ENCODE measurements at regions of chr10 and their contacts with region 1.

Region 1: GRCh38 chr10:103396064-103396788 is at the starts of genes ATP5MK and PDCD11:
- DNase-seq: peak; percentile 98 to 99 (median 98)
- H3K4me3 ChIP-seq: peak within 1 kb of the TSS; percentile 50 to 97 (median 90)
- H3K27ac ChIP-seq: peak within 1 kb of the TSS; percentile 78 to 92
- H3K4me1 ChIP-seq: peaks cover 11 to 36% (median 26%) of the 10 kb centered on the region in 4 experiments
- H3K27me3 ChIP-seq: no peaks in the 10 kb centered on the region

Region 2: GRCh38 chr10:102998005-102998404 is 398.2 kb before region 1 on chr10:
- CTCF ChIA-PET with region 1: no interaction called
- POLR2A ChIA-PET with region 1: no interaction called
- DNase-seq: no peak
- H3K4me3 ChIP-seq: no peak overlapping the region
- H3K27ac ChIP-seq: no peak overlapping the region
- H3K4me1 ChIP-seq: peaks cover 0 to 7% (median 5%) of the 10 kb centered on the region in 4 experiments
- H3K27me3 ChIP-seq: no peaks in the 10 kb centered on the region

Region 3: DNA sequence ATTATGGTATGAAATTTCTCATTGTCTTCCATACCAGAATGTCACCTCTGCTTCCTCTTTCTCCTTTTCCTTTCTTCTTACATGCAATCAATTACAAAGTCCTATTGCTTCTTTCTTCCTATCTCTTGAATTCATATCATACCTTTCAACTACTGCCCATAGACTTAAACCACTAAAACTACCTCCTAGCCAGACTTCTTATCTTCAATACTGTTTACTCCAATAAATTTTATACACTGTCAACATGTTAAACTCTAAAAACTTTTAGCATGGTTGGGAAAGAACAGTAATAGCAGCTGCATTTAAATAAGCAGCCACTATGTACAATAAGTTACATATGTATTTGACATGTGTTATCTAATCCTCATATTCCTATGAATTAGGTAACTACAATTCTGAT is 80.1 kb before region 1 on chr10:
- CTCF ChIA-PET with region 1: no interaction called
- POLR2A ChIA-PET with region 1: no interaction called
- DNase-seq: no peak
- H3K4me3 ChIP-seq: no peak overlapping the region
- H3K27ac ChIP-seq: no peak overlapping the region
- H3K4me1 ChIP-seq: no peaks in the 10 kb centered on the region
- H3K27me3 ChIP-seq: no peaks in the 10 kb centered on the region

Region 4: DNA sequence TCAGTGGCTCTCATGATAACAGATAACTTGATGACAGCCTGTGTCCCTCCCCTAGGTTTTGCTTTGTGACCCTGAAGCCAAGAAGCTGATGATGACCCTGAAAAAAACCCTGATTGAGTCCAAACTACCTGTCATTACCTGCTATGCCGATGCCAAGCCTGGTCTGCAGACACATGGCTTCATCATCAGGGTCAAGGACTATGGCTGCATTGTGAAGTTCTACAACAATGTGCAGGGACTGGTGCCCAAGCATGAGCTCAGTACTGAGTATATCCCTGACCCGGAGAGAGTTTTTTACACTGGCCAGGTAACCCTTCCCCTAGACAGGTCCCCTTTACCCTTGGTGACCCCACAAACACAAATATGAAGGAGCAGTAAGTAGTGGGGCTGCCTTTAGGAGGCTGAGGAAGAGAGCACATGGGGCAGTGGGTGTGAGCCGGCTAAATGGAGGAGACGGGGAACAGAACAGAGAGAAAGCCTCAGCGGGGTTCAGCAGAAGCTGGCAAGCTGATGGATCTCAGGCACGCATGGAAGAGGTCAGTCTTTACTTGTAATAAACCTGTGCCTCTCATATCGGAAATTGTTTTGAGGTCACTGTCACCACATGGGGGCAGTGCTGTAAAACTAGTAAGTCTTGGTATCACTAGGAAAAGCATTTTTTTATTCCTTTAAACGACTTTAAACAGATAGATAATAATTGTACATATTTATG is 20.4 kb after region 1 on chr10:
- CTCF ChIA-PET with region 1: interaction called, 10 read pairs
- POLR2A ChIA-PET with region 1: no interaction called
- DNase-seq: peak; percentile 74 to 88 (median 78)
- H3K4me3 ChIP-seq: no peak overlapping the region
- H3K27ac ChIP-seq: no peak overlapping the region
- H3K4me1 ChIP-seq: no peaks in the 10 kb centered on the region
- H3K27me3 ChIP-seq: no peaks in the 10 kb centered on the region

Measured in common myeloid progenitor, CD34-positive (primary cell).